ENCODE measurements at regions of chr20 and their contacts with region 1.

Region 1: DNA sequence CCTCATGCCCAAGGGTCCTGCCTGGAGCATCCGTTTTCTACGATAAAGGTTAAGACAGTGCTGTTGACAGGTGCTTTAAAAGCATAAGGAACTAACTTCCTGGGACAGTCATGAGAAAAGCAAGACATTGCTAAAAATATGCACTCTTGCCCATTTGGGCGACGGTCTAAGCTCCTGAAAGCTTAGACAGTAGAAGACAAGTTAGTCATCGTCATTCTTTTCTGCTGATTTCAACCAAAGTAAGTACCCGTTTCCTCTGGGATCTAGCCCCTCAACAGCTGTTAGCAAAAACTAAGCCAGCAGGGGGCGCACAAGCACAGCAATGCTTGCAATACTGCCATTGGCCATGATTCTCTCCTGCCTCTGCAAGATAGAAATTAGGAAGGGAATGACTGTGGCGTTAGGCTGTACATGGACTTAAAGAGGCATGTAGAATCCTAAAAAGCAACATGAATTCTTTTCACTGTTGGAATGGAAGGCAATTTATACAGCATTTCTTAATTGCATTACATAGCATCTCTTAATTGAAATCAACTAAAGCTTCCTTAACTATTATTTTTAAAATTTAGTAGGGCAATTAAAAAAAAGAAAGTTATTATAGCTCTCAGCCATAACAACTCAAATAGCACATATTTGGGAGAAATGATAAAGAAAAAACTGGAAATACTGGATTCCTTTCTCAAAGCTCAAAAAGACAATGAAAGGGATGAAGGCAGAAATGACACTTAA is 147.8 kb upstream of the RALGAPA2 start:
- DNase-seq: peak; percentile 67 to 79 (median 72)
- ATAC-seq: peak; percentile 93
- H3K4me3 ChIP-seq: no peak overlapping the region
- H3K27ac ChIP-seq: no peak overlapping the region
- H3K4me1 ChIP-seq: no peaks in the 10 kb centered on the region
- H3K27me3 ChIP-seq: peaks cover 0 to 3% of the 10 kb centered on the region in 2 experiments; a peak in 2 of 5 replicates
- CTCF ChIP-seq: peak; percentile 74 to 96 (median 85)
- EP300 ChIP-seq: no peak
- POLR2A ChIP-seq: no peak
- RAD21 ChIP-seq: peak; percentile 55 to 76

Region 2: DNA sequence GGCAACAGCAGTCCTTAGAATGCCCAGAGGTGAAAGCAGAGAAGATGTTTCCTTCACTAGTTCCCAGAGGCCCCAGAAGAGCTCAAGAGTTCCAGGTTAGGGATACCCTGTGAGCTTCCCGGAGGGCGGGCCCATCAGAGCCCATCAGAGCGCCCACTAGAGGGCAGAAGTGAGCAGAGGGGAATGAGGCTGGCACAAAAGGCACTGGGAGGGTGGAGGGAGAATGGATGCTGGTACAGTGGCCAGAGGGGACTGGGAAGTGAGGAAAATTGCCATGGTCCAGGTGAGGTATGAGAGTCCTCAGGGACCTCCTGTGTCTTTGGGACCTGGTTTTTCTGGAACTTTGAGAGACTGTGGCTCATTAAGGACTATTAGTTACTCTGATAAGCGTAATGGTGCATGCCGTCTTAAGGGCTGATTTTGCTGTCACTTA is 188.6 kb after region 1 on chr20:
- CTCF ChIA-PET with region 1: no interaction called
- POLR2A ChIA-PET with region 1: no interaction called
- in situ Hi-C with region 1: no loop called
- intact Hi-C with region 1: loop called (anchors 5 kb)
- DNase-seq: peak; percentile 51 to 74 (median 70)
- ATAC-seq: peak; percentile 96
- H3K4me3 ChIP-seq: no peak overlapping the region
- H3K27ac ChIP-seq: no peak overlapping the region
- H3K4me1 ChIP-seq: no peaks in the 10 kb centered on the region
- H3K27me3 ChIP-seq: peaks cover 0 to 5% of the 10 kb centered on the region in 2 experiments; a peak in 2 of 5 replicates
- CTCF ChIP-seq: peak; percentile 67 to 79 (median 71)
- EP300 ChIP-seq: no peak
- POLR2A ChIP-seq: no peak
- RAD21 ChIP-seq: peak; percentile 35 to 62; a peak in 3 of 4 replicates

Region 3: GRCh38 chr20:21125849-21126580 is 265.8 kb after region 1 on chr20 and contains the start of gene KIZ:
- CTCF ChIA-PET with region 1: no interaction called
- POLR2A ChIA-PET with region 1: no interaction called
- in situ Hi-C with region 1: no loop called
- intact Hi-C with region 1: loop called (anchors 10 kb)
- DNase-seq: peak; percentile 90 to 93 (median 90)
- ATAC-seq: peak; percentile 97
- H3K4me3 ChIP-seq: peak within 1 kb of the TSS; percentile 91
- H3K27ac ChIP-seq: peak within 1 kb of the TSS; percentile 72
- H3K4me1 ChIP-seq: peaks cover 5 to 17% of the 10 kb centered on the region in 2 experiments; a peak in 3 of 5 replicates
- H3K27me3 ChIP-seq: no peaks in the 10 kb centered on the region
- CTCF ChIP-seq: peak in 2 of 3 experiments; percentile 38 to 57; a peak in 4 of 6 replicates
- EP300 ChIP-seq: no peak
- POLR2A ChIP-seq: peak; percentile 81
- RAD21 ChIP-seq: peak in 1 of 2 experiments; percentile 28; a peak in 3 of 4 replicates
- polyA plus RNA-seq, gene KIZ: 4.9 to 7.5 TPM